ENCODE measurements at regions of chr3 and their contacts with region 1.

Region 1: DNA sequence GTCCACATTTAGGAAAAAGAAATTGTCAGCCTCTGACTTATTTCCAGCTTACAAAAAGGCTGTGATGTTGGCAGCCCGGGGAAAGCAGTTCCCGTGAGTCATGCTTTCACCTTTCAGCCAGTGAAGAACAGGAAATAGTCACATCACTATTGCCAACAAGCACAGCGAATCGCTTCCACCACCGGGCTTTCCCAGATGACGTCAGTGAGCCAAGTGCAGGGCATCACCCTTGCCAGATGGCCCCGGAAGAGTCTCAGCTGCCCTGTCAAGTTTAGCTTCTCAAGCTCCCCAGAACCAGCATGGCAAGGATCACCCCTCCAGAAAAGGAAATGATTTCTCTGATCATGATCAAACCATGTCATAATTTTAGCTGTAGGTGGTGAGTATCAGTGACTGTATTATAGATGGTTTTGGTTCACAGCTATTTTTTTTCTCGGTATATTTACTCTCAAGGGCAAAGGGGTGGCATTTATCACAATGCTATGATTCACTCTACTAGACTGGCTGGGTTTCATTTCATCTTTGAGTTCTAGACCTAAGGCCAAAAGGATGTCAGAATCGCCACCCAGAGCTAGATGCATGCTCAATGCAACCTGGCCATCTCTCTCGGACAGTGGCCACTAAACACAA is 32.9 kb downstream of the B3GNT5 start:
- DNase-seq: peak; percentile 69
- ATAC-seq: peak; percentile 95
- H3K4me3 Mint-ChIP-seq: peak overlapping the region; percentile 78
- H3K27ac Mint-ChIP-seq: peak overlapping the region; percentile 94
- H3K4me1 Mint-ChIP-seq: peaks cover 43% of the 10 kb centered on the region
- H3K27me3 Mint-ChIP-seq: no peaks in the 10 kb centered on the region
- CTCF ChIP-seq: no peak

Region 2: GRCh38 chr3:183099026-183099837 is 186.7 kb before region 1 on chr3 and contains the start of gene MCCC1:
- CTCF ChIA-PET with region 1: no interaction called
- POLR2A ChIA-PET with region 1: no interaction called
- intact Hi-C with region 1: loop called (anchors 1 kb)
- DNase-seq: peak; percentile 91
- ATAC-seq: peak; percentile 96
- H3K4me3 Mint-ChIP-seq: peak within 1 kb of the TSS; percentile 97
- H3K27ac Mint-ChIP-seq: peak within 1 kb of the TSS; percentile 91
- H3K4me1 Mint-ChIP-seq: peaks cover 34% of the 10 kb centered on the region
- H3K27me3 Mint-ChIP-seq: no peaks in the 10 kb centered on the region
- CTCF ChIP-seq: no peak
- total RNA-seq, gene MCCC1: 25.2 and 31.6 TPM in 2 replicates

Region 3: GRCh38 chr3:183161552-183162336 is 124.2 kb before region 1 on chr3:
- CTCF ChIA-PET with region 1: no interaction called
- POLR2A ChIA-PET with region 1: no interaction called
- intact Hi-C with region 1: loop called (anchors 1 kb)
- DNase-seq: peak; percentile 36
- ATAC-seq: peak; percentile 78
- H3K4me3 Mint-ChIP-seq: peak overlapping the region; percentile 81
- H3K27ac Mint-ChIP-seq: peak overlapping the region; percentile 77
- H3K4me1 Mint-ChIP-seq: peaks cover 34% of the 10 kb centered on the region
- H3K27me3 Mint-ChIP-seq: peaks cover 48% of the 10 kb centered on the region
- CTCF ChIP-seq: no peak

Region 4: GRCh38 chr3:183210839-183211341 is 75.1 kb before region 1 on chr3:
- CTCF ChIA-PET with region 1: no interaction called
- POLR2A ChIA-PET with region 1: no interaction called
- intact Hi-C with region 1: loop called (anchors 5 kb)
- DNase-seq: no peak
- ATAC-seq: peak; percentile 34
- H3K4me3 Mint-ChIP-seq: no peak overlapping the region
- H3K27ac Mint-ChIP-seq: peak overlapping the region; percentile 42
- H3K4me1 Mint-ChIP-seq: peaks cover 32% of the 10 kb centered on the region
- H3K27me3 Mint-ChIP-seq: peaks cover 30% of the 10 kb centered on the region
- CTCF ChIP-seq: no peak

Region 5: GRCh38 chr3:183252973-183253901 is 32.7 kb before region 1 on chr3 and contains the start of gene B3GNT5:
- CTCF ChIA-PET with region 1: no interaction called
- POLR2A ChIA-PET with region 1: interaction called, 4 read pairs
- intact Hi-C with region 1: loop called (anchors 1 kb)
- DNase-seq: peak; percentile 35
- ATAC-seq: peak; percentile 59
- H3K4me3 Mint-ChIP-seq: peak within 1 kb of the TSS; percentile 78
- H3K27ac Mint-ChIP-seq: no peak within 1 kb of the TSS
- H3K4me1 Mint-ChIP-seq: peaks cover 4% of the 10 kb centered on the region
- H3K27me3 Mint-ChIP-seq: peaks cover 40% of the 10 kb centered on the region
- CTCF ChIP-seq: no peak
- total RNA-seq, gene B3GNT5: 0.37 and 0.38 TPM in 2 replicates

Region 6: DNA sequence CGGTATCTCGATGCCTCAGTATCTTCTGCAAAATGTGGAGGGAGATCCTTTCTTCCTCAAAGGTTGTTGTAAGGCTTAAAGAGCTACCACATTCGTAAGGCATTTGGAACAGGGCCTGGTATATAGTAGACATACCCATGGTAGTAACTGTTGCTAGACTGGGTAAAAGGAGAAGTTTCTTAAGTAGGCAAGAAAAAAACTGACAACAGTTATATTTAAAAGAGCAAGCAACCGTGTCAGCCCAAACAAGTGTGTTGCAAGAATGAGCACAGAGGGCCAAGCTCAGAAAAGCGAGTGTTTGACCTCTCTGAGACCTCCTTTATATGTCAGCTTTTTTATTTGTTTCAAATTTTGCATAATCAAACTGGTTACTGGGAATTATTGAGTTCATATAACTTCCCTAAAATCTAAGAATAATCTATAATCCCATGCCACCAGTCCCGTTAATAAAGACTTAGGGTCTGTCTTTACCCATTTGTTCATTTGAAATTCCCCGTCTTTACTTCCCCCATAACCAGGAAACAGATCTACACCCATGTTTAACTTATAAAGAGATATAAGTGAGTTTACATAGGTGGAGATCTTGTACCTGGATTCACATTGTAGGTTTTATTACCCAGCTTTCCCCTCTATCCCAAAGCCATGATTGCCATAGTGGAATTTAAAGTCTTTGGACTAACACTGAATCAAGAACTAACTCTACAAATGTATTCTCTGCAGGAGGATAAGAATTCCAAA is 25.6 kb before region 1 on chr3:
- CTCF ChIA-PET with region 1: no interaction called
- POLR2A ChIA-PET with region 1: no interaction called
- intact Hi-C with region 1: loop called (anchors 2 kb)
- DNase-seq: no peak
- ATAC-seq: peak; percentile 67
- H3K4me3 Mint-ChIP-seq: peak overlapping the region; percentile 33
- H3K27ac Mint-ChIP-seq: peak overlapping the region; percentile 15
- H3K4me1 Mint-ChIP-seq: peaks cover 23% of the 10 kb centered on the region
- H3K27me3 Mint-ChIP-seq: peaks cover 9% of the 10 kb centered on the region
- CTCF ChIP-seq: no peak

Region 7: GRCh38 chr3:183306798-183307671 is 21.1 kb after region 1 on chr3:
- CTCF ChIA-PET with region 1: no interaction called
- POLR2A ChIA-PET with region 1: interaction called, 9 read pairs
- intact Hi-C with region 1: loop called (anchors 1 kb)
- DNase-seq: no peak
- ATAC-seq: peak; percentile 93
- H3K4me3 Mint-ChIP-seq: peak overlapping the region; percentile 30
- H3K27ac Mint-ChIP-seq: peak overlapping the region; percentile 22
- H3K4me1 Mint-ChIP-seq: peaks cover 12% of the 10 kb centered on the region
- H3K27me3 Mint-ChIP-seq: no peaks in the 10 kb centered on the region
- CTCF ChIP-seq: no peak